HepG2 (cell line): ENCODE measurements at regions of chr4 and their contacts with region 1.

Region 1: GRCh38 chr4:56129431-56129861 is 180.7 kb downstream of the CEP135 start:
- DNase-seq: peak; percentile 56
- ATAC-seq: peak; percentile 97
- H3K4me3 ChIP-seq: no peak overlapping the region
- H3K27ac ChIP-seq: no peak overlapping the region
- H3K4me1 ChIP-seq: peaks cover 20% of the 10 kb centered on the region
- H3K27me3 ChIP-seq: no peaks in the 10 kb centered on the region
- CTCF ChIP-seq: peak; percentile 89
- EP300 ChIP-seq: no peak
- POLR2A ChIP-seq: no peak
- RAD21 ChIP-seq: peak; percentile 87

Region 2: DNA sequence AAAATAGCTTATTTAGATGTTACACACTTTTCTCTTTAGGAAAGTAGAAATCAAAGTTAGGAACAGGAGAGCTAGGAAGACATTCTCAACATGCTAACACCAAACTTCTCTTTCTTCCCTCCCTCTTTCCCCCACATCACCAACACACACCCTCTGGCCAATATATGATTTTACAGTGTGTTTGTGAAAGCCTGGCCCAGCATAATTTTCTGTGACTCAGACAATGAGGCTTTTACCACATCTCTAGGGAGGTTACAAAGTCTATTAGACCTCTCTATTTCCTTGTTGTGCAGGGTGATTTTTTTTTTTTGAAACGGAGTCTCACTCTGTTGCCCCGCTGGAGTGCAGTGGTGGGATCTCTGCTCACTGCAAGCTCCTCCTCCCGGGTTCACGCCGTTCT is 67.9 kb after region 1 on chr4:
- CTCF ChIA-PET with region 1: no interaction called
- POLR2A ChIA-PET with region 1: no interaction called
- in situ Hi-C with region 1: no loop called
- intact Hi-C with region 1: no loop called
- DNase-seq: no peak
- ATAC-seq: no peak
- H3K4me3 ChIP-seq: no peak overlapping the region
- H3K27ac ChIP-seq: no peak overlapping the region
- H3K4me1 ChIP-seq: no peaks in the 10 kb centered on the region
- H3K27me3 ChIP-seq: no peaks in the 10 kb centered on the region
- CTCF ChIP-seq: no peak
- EP300 ChIP-seq: no peak
- POLR2A ChIP-seq: no peak
- RAD21 ChIP-seq: no peak

Region 3: DNA sequence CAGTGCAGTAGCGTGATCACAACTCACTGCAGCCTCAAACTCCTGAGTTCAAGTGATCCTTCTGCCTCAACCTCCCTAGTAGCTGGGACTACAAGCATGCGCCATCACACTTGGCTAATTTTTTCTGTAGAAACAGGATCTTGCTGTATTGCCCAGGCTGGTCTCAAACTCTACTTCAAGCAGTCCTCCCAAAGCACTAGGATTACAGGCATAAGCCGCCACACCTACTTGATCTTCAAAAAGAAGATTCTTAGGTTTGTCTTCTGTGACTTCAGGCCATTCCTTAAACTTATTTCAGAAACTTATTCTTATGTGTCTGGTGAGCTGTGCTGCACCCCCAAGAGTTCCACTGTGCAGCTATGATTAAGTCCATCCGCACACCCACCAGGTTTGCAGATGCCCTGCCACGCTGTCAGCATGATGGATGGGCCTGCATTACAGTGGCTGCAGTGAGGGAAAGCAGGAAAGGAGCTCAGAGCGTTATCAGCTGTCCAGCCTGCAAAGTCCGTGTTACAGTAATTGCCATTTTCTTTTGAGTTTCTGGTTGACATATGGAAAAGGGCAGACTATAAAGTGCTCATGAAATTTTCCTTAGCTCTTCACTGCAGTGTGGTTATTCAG is 111.2 kb after region 1 on chr4:
- CTCF ChIA-PET with region 1: no interaction called
- POLR2A ChIA-PET with region 1: no interaction called
- in situ Hi-C with region 1: no loop called
- intact Hi-C with region 1: loop called (anchors 5 kb)
- DNase-seq: peak; percentile 55
- ATAC-seq: peak; percentile 87
- H3K4me3 ChIP-seq: peak overlapping the region; percentile 28 to 43 (median 29); a peak in 3 of 6 replicates
- H3K27ac ChIP-seq: peak overlapping the region; percentile 65
- H3K4me1 ChIP-seq: peaks cover 75% of the 10 kb centered on the region
- H3K27me3 ChIP-seq: no peaks in the 10 kb centered on the region
- CTCF ChIP-seq: no peak
- EP300 ChIP-seq: peak in 1 of 2 experiments; percentile 40; a peak in 1 of 4 replicates
- POLR2A ChIP-seq: no peak
- RAD21 ChIP-seq: no peak

Region 4: GRCh38 chr4:56255820-56256219 is 126.4 kb after region 1 on chr4:
- CTCF ChIA-PET with region 1: interaction called, 4 read pairs
- POLR2A ChIA-PET with region 1: no interaction called
- in situ Hi-C with region 1: no loop called
- intact Hi-C with region 1: loop called (anchors 1 kb)
- DNase-seq: no peak
- ATAC-seq: peak; percentile 38; the same call in 2 of the 3 replicates
- H3K4me3 ChIP-seq: no peak overlapping the region
- H3K27ac ChIP-seq: no peak overlapping the region
- H3K4me1 ChIP-seq: peaks cover 22% of the 10 kb centered on the region
- H3K27me3 ChIP-seq: no peaks in the 10 kb centered on the region
- CTCF ChIP-seq: peak; percentile 44
- EP300 ChIP-seq: no peak
- POLR2A ChIP-seq: no peak
- RAD21 ChIP-seq: no peak

Region 5: DNA sequence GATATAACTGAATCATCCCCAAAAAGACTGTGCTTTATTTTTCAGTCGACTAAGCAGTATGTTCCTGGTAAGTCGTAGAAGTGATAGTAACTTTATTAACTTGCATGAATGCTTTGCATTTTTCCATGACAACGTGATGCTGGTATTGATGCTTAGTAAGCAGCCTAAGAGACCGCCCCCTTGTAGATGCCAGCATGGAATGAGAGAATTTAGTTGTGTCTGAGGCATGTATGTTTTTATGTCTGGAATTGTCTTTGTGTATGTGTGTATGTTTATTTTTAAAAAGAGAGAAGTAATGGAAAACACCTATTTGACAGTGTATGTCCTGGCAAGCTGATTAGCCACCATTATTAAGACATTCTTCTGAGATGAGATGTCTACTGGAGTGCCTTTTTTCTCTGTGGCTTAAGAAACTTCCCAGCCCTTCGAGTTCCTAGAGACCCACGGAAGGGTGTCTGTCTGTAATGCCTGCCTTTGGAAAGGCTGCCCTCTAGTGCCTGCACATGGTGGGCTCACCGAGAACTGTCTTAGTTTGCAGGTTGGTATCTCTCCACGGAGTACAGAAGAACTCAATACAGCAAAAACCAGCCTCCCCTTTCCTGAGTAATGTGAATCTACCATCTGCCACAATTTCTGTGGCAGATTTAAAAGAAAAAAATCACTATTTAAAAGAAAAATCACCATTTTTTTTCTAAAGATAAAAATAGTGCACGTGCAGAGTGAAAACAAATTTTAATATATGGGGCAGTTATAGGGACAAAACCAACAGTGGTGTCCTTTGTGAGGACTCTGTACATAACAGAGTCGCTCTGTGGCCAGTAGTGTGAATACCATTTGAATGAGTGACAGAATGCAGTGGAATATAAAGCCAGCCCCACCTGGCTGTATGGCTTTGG is 172.0 kb after region 1 on chr4:
- CTCF ChIA-PET with region 1: interaction called, 34 read pairs
- POLR2A ChIA-PET with region 1: no interaction called
- in situ Hi-C with region 1: loop called (anchors 5 kb)
- intact Hi-C with region 1: loop called (anchors 1 kb)
- DNase-seq: peak; percentile 67
- ATAC-seq: peak; percentile 97
- H3K4me3 ChIP-seq: no peak overlapping the region
- H3K27ac ChIP-seq: no peak overlapping the region
- H3K4me1 ChIP-seq: peaks cover 28% of the 10 kb centered on the region
- H3K27me3 ChIP-seq: no peaks in the 10 kb centered on the region
- CTCF ChIP-seq: peak; percentile 94
- EP300 ChIP-seq: no peak
- POLR2A ChIP-seq: no peak
- RAD21 ChIP-seq: peak; percentile 90

Region 6: DNA sequence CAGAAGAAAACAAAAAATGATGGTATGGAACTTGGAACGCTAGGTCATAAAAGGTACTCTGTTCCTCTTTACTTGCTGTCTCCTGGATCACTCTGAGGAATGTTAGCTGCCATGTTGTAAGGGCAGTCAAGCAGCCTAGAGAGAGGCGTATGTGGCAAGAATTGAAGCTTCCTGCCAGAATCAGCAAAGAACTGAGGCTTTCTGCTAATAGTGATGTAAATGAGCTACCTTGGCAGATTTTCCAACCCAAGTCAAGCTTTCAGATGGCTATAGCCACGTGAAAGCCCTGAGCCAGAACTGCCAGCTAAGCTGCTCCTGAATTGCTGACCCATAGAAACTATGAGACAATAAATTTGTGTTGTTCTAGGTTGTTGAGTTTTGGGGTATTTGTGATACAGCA is 219.1 kb after region 1 on chr4:
- CTCF ChIA-PET with region 1: no interaction called
- POLR2A ChIA-PET with region 1: no interaction called
- in situ Hi-C with region 1: no loop called
- intact Hi-C with region 1: no loop called
- DNase-seq: no peak
- ATAC-seq: no peak
- H3K4me3 ChIP-seq: no peak overlapping the region
- H3K27ac ChIP-seq: no peak overlapping the region
- H3K4me1 ChIP-seq: no peaks in the 10 kb centered on the region
- H3K27me3 ChIP-seq: no peaks in the 10 kb centered on the region; a peak in 1 of 5 replicates
- CTCF ChIP-seq: no peak
- EP300 ChIP-seq: no peak
- POLR2A ChIP-seq: no peak
- RAD21 ChIP-seq: no peak